ENCODE measurements at regions of chr2 and their contacts with region 1.

Region 1: GRCh38 chr2:190319555-190320498 is at the start of gene HIBCH:
- DNase-seq: peak; percentile 94 to 96
- H3K4me3 ChIP-seq: peak within 1 kb of the TSS; percentile 49 to 90 (median 78)
- H3K27ac ChIP-seq: no peak within 1 kb of the TSS
- H3K4me1 ChIP-seq: peaks cover 0 to 5% (median 0%) of the 10 kb centered on the region in 4 experiments; a peak in 2 of 7 replicates
- H3K27me3 ChIP-seq: no peaks in the 10 kb centered on the region
- CTCF ChIP-seq: peak; percentile 78 to 93 (median 82)
- EP300 ChIP-seq: peak in 1 of 2 experiments; percentile 79; a peak in 1 of 3 replicates
- POLR2A ChIP-seq: peak; percentile 50 to 54; a peak in 2 of 3 replicates
- RAD21 ChIP-seq: peak; percentile 29 to 44; a peak in 2 of 4 replicates
- total RNA-seq, gene HIBCH: 30.7 and 31.8 TPM in 2 replicates

Region 2: DNA sequence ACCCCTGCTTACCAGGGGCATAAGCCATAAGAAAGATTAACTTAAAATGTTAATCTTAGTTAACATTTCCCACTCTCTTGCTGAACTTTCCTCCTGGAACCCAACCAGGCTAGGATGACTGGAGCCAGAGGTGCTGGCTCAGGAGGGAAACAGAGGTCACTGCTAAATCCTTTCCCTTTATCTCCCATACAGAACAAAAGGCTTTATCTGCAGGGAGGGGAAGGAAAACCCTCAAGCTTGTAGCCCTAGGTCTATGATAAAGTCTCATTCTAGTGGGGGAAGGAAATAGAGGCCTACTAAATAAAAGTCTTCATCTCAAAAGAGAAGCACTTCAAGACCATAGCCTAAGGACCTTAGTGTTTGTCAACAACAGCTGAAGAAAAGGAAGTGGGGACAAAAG is 18.8 kb before region 1 on chr2:
- CTCF ChIA-PET with region 1: interaction called, 12 read pairs
- POLR2A ChIA-PET with region 1: no interaction called
- DNase-seq: no peak
- H3K4me3 ChIP-seq: no peak overlapping the region
- H3K27ac ChIP-seq: no peak overlapping the region
- H3K4me1 ChIP-seq: peaks cover 0 to 2% (median 0%) of the 10 kb centered on the region in 4 experiments; a peak in 1 of 7 replicates
- H3K27me3 ChIP-seq: no peaks in the 10 kb centered on the region
- CTCF ChIP-seq: no peak
- EP300 ChIP-seq: no peak
- POLR2A ChIP-seq: no peak
- RAD21 ChIP-seq: no peak

Measured in H1 (cell line).